Ascending aorta (tissue), 2 donors: ENCODE measurements at regions of chr3 and their contacts with region 1.

Region 1: GRCh38 chr3:119676771-119677640 is at the start of gene COX17:
- DNase-seq: peak; percentile 80 to 97
- H3K4me3 ChIP-seq: peak within 1 kb of the TSS; percentile 56 to 80
- H3K27ac ChIP-seq: peak within 1 kb of the TSS; percentile 93
- H3K4me1 ChIP-seq: peaks cover 3 to 18% of the 10 kb centered on the region in 2 donors
- H3K27me3 ChIP-seq: no peaks in the 10 kb centered on the region
- CTCF ChIP-seq: no peak
- total RNA-seq, gene COX17: 12.5 TPM

Region 2: GRCh38 chr3:119240591-119241434 is 436.2 kb before region 1 on chr3 and contains the start of gene B4GALT4:
- intact Hi-C with region 1: loop called (anchors 10 kb)
- DNase-seq: peak; percentile 52 to 92
- H3K4me3 ChIP-seq: peak within 1 kb of the TSS; percentile 80 to 86
- H3K27ac ChIP-seq: peak within 1 kb of the TSS; percentile 92 to 96
- H3K4me1 ChIP-seq: peaks cover 5 to 6% of the 10 kb centered on the region in 2 donors
- H3K27me3 ChIP-seq: no peaks in the 10 kb centered on the region
- CTCF ChIP-seq: no peak
- total RNA-seq, gene B4GALT4: 6.4 TPM

Region 3: GRCh38 chr3:119498186-119498987 is 178.6 kb before region 1 on chr3 and contains the start of gene TIMMDC1:
- intact Hi-C with region 1: loop called (anchors 1 kb)
- DNase-seq: peak; percentile 90 to 98
- H3K4me3 ChIP-seq: peak within 1 kb of the TSS; percentile 78 to 92
- H3K27ac ChIP-seq: peak within 1 kb of the TSS; percentile 93 to 94
- H3K4me1 ChIP-seq: peaks cover 5 to 24% of the 10 kb centered on the region in 2 donors
- H3K27me3 ChIP-seq: no peaks in the 10 kb centered on the region
- CTCF ChIP-seq: no peak
- total RNA-seq, gene TIMMDC1: 31.1 TPM

Region 4: GRCh38 chr3:119579366-119580165 is 97.4 kb before region 1 on chr3 and contains the start of gene ADPRH:
- intact Hi-C with region 1: loop called (anchors 1 kb)
- DNase-seq: peak in 1 of 2 donors; percentile 86
- H3K4me3 ChIP-seq: peak within 1 kb of the TSS; percentile 55 to 88
- H3K27ac ChIP-seq: peak within 1 kb of the TSS; percentile 92 to 93
- H3K4me1 ChIP-seq: peaks cover 0 to 4% of the 10 kb centered on the region in 2 donors
- H3K27me3 ChIP-seq: no peaks in the 10 kb centered on the region
- CTCF ChIP-seq: no peak
- total RNA-seq, gene ADPRH: 32.1 TPM

Region 5: DNA sequence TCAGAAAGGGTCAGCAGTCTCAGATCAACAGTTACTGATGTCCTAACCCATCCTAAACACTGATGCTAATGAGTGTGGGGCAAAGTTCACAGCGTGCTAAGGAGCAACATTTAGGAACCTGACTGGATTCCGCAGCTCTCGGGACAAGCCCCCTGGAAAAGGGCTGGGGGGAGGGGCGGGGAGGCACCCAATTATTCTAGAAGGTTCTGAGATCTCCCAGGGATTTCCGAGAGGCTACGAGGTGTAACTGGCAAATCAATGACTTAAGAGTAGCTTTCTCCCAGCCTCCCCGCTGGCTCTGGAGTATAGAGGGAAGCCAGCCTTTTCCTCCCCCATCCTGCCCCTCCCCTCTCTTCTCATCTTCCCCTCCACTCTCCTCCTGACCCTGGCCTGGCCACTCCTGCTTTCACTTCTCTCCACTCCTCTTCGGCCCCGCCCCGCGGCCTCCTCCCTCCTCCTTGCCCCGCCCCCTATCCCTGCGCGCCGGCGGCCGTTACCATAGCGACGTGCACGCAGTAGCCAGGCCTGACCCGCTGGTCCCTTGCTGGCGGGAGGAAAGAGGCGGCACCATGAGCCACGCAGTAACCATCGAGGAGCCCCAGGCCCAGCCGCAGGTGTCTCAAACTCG is 25.6 kb after region 1 on chr3 and contains the start of gene CFAP91:
- intact Hi-C with region 1: loop called (anchors 2 kb)
- DNase-seq: peak; percentile 93 to 99
- H3K4me3 ChIP-seq: peak within 1 kb of the TSS; percentile 54 to 73
- H3K27ac ChIP-seq: peak within 1 kb of the TSS; percentile 65
- H3K4me1 ChIP-seq: peaks cover 0 to 5% of the 10 kb centered on the region in 2 donors
- H3K27me3 ChIP-seq: no peaks in the 10 kb centered on the region
- CTCF ChIP-seq: no peak
- total RNA-seq, gene CFAP91: 3.5 TPM